ENCODE measurements at regions of chr20 and their contacts with region 1.

Region 1: DNA sequence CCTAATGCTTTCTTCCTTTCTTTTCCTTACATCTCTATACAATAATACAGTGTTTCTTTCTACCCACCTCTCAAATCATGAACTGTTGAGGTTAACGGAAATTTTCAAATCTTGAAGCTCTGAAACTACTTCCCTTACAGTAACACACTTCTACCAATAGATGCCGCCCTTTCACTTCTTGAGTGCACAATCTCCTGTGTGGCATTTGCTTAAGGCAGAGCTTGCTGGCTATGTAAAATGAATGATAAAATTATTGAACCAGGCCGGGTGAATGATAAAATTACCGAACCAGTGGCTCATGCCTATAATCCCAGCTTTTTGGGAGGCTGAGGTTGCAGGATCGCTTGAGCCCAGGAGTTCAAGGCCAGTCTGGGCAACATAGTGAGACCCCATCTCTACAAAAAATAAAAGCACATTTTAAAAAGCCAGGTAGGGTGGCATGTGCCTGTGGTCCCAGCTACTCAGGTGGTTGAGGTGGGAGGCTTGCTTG is 56.8 kb downstream of the KCNS1 start:
- DNase-seq: peak in 2 of 4 donors; percentile 36 to 69
- ATAC-seq: peak; percentile 91
- H3K4me3 ChIP-seq: no peak overlapping the region
- H3K27ac ChIP-seq: no peak overlapping the region
- H3K4me1 ChIP-seq: peaks cover 7 to 53% of the 10 kb centered on the region in 2 donors
- H3K27me3 ChIP-seq: no peaks in the 10 kb centered on the region
- CTCF ChIP-seq: peak; percentile 66 to 89

Region 2: DNA sequence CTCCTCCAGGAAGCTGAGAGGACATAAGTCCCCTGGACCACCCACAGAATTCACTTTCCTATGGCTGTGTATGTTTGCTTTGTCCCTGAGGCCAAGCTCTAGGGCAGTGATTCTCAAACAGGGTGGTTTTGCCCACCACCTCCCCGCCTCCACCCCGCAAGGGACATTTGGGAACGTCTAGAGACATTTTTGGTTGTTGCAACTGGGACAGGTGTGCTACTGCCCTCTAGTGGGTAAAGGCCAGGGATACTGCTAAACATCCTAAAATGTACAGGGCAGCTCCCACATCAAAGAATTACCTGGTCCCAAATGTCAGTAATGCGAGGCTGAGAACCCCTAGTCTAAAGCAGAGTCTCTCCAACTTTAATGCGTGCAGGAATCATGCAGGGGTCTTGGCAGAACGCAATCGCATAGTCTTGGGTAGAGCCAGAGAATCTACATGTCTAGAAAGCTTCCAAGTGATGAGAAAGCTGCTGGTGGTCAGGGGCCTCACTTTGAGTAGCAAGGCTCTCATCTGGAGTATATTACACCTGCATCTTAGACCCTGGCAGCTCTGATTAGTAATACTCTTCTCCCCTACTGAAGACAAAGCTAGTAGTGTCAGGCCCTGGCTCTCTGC is 51.7 kb after region 1 on chr20:
- intact Hi-C with region 1: loop called in 1 of 2 experiments (anchors 10 kb)
- DNase-seq: peak in 1 of 4 donors; percentile 42
- ATAC-seq: peak; percentile 82
- H3K4me3 ChIP-seq: no peak overlapping the region
- H3K27ac ChIP-seq: no peak overlapping the region
- H3K4me1 ChIP-seq: peaks cover 8 to 21% of the 10 kb centered on the region in 2 donors
- H3K27me3 ChIP-seq: peaks cover 22 to 50% of the 10 kb centered on the region in 2 donors
- CTCF ChIP-seq: peak; percentile 51 to 64

Measured in left lung (tissue), 14 donors.